ENCODE measurements at regions of chr14 and their contacts with region 1.

Region 1: GRCh38 chr14:44091652-44092051 is 415.4 kb downstream of the FSCB start:
- DNase-seq: no peak
- H3K4me3 ChIP-seq: no peak overlapping the region
- H3K27ac ChIP-seq: no peak overlapping the region
- H3K4me1 ChIP-seq: no peaks in the 10 kb centered on the region
- H3K27me3 ChIP-seq: no peaks in the 10 kb centered on the region
- CTCF ChIP-seq: no peak
- EP300 ChIP-seq: no peak
- POLR2A ChIP-seq: no peak

Region 2: GRCh38 chr14:42214981-42215491 is 1876.6 kb before region 1 on chr14:
- intact Hi-C with region 1: loop called in 1 of 4 experiments (anchors 5 kb)
- DNase-seq: no peak
- H3K4me3 ChIP-seq: no peak overlapping the region
- H3K27ac ChIP-seq: no peak overlapping the region
- H3K4me1 ChIP-seq: peaks cover 3% of the 10 kb centered on the region
- H3K27me3 ChIP-seq: no peaks in the 10 kb centered on the region
- CTCF ChIP-seq: no peak
- EP300 ChIP-seq: no peak
- POLR2A ChIP-seq: no peak

Region 3: DNA sequence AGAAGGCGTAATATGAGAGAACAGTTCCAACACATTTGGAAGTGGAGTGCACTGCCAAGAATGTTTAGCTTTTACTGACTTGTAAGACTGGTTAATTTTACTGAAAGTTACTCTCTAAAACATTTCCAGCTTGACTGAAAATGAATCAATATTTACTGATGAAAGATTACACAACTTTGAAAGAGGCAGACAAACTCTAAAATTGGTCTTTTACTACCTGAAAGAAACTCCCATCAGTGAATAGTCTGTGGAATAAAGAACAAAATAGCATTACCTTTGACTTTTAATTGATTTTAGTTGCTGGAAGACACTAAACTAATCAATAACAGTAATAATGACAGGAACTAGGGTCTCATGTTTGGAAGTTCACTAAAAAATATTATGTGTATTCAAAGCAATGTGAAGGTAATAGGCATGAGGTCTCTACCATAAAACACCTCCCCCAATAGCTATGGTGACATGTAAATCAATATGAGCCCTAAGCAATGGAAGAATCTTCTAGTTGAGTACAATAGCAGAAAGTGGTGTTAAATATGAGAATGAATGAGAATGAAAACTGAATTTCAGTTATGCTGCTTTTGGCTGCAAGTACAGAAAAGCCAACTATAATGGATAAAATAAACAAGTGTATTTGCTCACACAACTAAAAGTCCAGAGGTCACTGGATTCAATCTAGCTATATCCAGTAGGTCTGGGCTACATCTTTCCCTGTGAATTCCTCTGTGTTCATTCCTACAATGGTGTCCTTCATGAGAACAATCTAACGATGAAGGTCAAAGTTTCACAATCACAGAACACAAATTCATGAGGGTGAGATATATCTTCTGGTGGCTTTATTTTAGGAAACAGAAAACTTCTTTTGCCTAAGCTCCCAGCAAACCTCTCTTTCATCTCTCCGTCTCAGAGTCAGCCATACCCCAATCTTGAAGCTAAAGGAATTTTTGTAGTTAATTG is 312.7 kb before region 1 on chr14:
- intact Hi-C with region 1: no loop called
- DNase-seq: no peak
- H3K4me3 ChIP-seq: no peak overlapping the region
- H3K27ac ChIP-seq: no peak overlapping the region
- H3K4me1 ChIP-seq: no peaks in the 10 kb centered on the region
- H3K27me3 ChIP-seq: no peaks in the 10 kb centered on the region
- CTCF ChIP-seq: no peak
- EP300 ChIP-seq: no peak
- POLR2A ChIP-seq: no peak

Region 4: DNA sequence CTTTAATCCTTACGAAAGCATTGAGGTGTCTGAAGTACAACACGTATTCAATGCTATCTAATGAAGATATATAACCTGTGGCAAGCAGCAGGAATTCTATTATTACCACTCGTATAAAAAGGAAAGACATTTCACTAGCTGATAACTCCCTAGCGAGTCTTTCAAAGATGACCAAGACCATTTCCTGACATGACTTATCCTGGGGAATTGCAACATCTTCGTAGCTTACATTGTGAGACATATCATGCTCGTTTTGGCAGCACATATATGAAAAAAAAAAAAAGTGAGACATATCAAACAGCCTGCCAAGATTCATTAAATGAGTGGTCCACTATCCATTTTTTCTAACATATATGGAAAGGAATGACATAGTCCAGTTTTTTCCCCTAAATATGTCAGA is 78.4 kb after region 1 on chr14:
- intact Hi-C with region 1: no loop called
- DNase-seq: no peak
- H3K4me3 ChIP-seq: no peak overlapping the region
- H3K27ac ChIP-seq: no peak overlapping the region
- H3K4me1 ChIP-seq: no peaks in the 10 kb centered on the region
- H3K27me3 ChIP-seq: no peaks in the 10 kb centered on the region
- CTCF ChIP-seq: no peak
- EP300 ChIP-seq: no peak
- POLR2A ChIP-seq: no peak